GM23248 (cell line): ENCODE measurements at regions of chr3 and their contacts with region 1.

Region 1: DNA sequence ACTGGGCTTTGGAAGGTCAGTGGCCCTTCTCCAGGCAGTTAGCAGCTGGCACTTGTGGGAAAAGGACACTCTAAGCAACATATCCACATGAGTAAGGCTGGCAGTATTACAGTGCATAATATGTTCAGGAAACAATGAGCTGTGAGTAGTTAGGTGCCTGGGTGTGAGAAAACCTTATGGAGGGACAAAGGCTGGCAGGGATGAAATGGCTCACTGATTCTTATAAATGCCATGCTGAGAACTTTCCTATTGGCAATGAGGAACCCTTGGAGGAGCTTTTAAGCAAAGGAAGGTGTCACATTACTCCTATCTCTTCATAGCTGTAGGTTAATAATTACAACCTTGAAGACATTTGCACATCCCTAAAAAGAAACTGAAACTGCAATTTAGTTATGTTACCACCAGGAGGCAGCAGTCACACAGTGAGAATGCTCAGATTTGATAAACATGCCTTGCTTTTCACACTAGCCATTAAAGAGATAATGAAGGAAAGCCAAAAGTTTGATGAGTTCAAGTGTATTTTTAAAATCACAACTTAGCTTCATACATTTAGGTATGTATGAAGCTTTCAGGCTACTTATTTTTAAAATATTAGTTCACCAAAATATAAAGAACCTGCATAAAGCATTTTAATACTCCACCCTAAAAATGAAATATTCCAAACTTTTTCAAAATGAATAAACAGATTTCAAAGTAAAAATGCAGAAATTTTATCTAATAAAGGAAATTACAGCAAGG is 136.6 kb upstream of the SLC2A2 start:
- DNase-seq: no peak
- H3K4me3 ChIP-seq: no peak overlapping the region
- H3K27ac ChIP-seq: no peak overlapping the region
- H3K4me1 ChIP-seq: peaks cover 26% of the 10 kb centered on the region
- H3K27me3 ChIP-seq: no peaks in the 10 kb centered on the region

Region 2: GRCh38 chr3:170961616-170962400 is 201.3 kb before region 1 on chr3:
- in situ Hi-C with region 1: loop called (anchors 10 kb)
- DNase-seq: peak; percentile 68
- H3K4me3 ChIP-seq: no peak overlapping the region
- H3K27ac ChIP-seq: no peak overlapping the region
- H3K4me1 ChIP-seq: no peaks in the 10 kb centered on the region; the same call in 1 of the 2 replicates
- H3K27me3 ChIP-seq: no peaks in the 10 kb centered on the region